ENCODE measurements at regions of chr11 and their contacts with region 1.

Region 1: GRCh38 chr11:56799691-56800210 is 51.3 kb upstream of the OR9G4 start:
- DNase-seq: no peak
- ATAC-seq: no peak
- H3K4me3 ChIP-seq: no peak overlapping the region
- H3K27ac ChIP-seq: no peak overlapping the region
- H3K4me1 ChIP-seq: no peaks in the 10 kb centered on the region
- H3K27me3 ChIP-seq: no peaks in the 10 kb centered on the region
- CTCF ChIP-seq: no peak
- POLR2A ChIP-seq: no peak
- RAD21 ChIP-seq: no peak

Region 2: DNA sequence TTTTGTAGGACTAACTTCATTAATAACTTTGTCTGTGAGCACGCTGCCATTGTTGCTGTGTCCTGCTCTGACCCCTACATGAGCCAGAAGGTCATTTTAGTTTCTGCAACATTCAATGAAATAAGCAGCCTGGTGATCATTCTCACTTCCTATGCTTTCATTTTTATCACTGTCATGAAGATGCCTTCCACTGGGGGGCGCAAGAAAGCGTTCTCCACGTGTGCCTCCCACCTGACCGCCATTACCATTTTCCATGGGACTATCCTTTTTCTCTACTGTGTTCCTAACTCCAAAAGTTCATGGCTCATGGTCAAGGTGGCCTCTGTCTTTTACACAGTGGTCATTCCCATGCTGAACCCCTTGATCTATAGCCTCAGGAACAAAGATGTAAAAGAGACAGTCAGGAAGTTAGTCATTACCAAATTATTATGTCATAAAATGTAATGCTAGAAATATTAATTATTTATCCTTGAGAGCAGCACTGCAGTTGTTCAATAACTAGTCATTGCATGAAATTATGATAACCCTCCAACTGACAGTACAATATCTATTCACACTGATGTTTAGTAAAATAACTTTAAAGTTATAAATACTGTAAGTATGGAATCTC is 1072.9 kb before region 1 on chr11:
- CTCF ChIA-PET with region 1: no interaction called
- POLR2A ChIA-PET with region 1: no interaction called
- RAD21 ChIA-PET with region 1: no interaction called
- intact Hi-C with region 1: loop called (anchors 10 kb)
- DNase-seq: no peak
- ATAC-seq: no peak
- H3K4me3 ChIP-seq: no peak overlapping the region
- H3K27ac ChIP-seq: no peak overlapping the region
- H3K4me1 ChIP-seq: no peaks in the 10 kb centered on the region
- H3K27me3 ChIP-seq: no peaks in the 10 kb centered on the region
- CTCF ChIP-seq: peak in 2 of 3 experiments; percentile 24 to 45; a peak in 1 of 6 replicates
- POLR2A ChIP-seq: no peak
- RAD21 ChIP-seq: no peak

Region 3: DNA sequence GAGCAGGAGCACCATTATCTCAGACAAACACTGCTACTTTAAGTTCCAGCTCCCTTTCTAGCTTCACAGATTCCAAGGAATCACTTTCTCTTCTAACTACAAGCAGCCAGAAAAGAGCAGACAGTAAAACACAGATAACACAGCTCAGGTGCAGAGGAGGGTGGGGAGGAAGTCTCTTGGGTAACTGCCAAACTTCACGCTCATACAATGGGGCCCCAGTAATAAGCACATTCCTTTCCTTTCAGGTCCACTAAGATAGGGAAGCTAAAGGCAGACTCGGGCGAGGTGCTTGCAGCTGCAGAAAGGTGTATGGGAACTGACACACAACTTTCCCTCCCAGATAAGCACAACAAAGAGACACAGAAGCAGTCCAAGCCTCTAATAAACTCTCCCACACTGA is 17.9 kb after region 1 on chr11:
- CTCF ChIA-PET with region 1: no interaction called
- POLR2A ChIA-PET with region 1: no interaction called
- RAD21 ChIA-PET with region 1: no interaction called
- intact Hi-C with region 1: loop called (anchors 2 kb)
- DNase-seq: no peak
- ATAC-seq: no peak
- H3K4me3 ChIP-seq: no peak overlapping the region
- H3K27ac ChIP-seq: no peak overlapping the region
- H3K4me1 ChIP-seq: no peaks in the 10 kb centered on the region
- H3K27me3 ChIP-seq: no peaks in the 10 kb centered on the region
- CTCF ChIP-seq: no peak
- POLR2A ChIP-seq: no peak
- RAD21 ChIP-seq: no peak

Region 4: GRCh38 chr11:57008373-57008772 is 208.6 kb after region 1 on chr11:
- CTCF ChIA-PET with region 1: no interaction called
- POLR2A ChIA-PET with region 1: no interaction called
- RAD21 ChIA-PET with region 1: no interaction called
- intact Hi-C with region 1: no loop called
- DNase-seq: no peak
- ATAC-seq: no peak
- H3K4me3 ChIP-seq: no peak overlapping the region
- H3K27ac ChIP-seq: no peak overlapping the region
- H3K4me1 ChIP-seq: no peaks in the 10 kb centered on the region
- H3K27me3 ChIP-seq: peaks cover 6% of the 10 kb centered on the region; the same call in 1 of the 2 replicates
- CTCF ChIP-seq: no peak
- POLR2A ChIP-seq: no peak
- RAD21 ChIP-seq: no peak